Mammary epithelial cell (primary cell): ENCODE measurements at regions of chr20 and their contacts with region 1.

Region 1: DNA sequence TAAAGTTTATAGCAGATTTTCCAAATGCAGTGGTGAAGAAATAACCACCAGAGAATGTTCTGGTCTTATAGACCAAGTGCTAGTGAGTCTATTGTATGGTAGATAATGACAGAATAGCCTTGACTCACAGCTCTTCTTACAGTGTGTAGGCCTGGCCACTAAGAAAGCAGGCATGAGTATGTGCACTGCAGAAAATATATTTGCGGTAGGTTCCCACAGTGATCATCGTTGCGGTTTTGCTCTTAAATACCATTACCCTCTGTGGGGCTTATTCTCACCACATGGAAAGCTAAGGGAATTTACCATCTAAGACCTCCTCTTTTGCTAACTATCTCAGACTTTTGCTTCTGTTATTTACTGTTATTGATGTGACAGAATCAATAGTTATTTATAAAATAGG is 212.3 kb upstream of the SYNDIG1 start:
- DNase-seq: no peak
- H3K4me3 ChIP-seq: no peak overlapping the region
- H3K27ac ChIP-seq: no peak overlapping the region
- H3K4me1 ChIP-seq: no peaks in the 10 kb centered on the region
- H3K27me3 ChIP-seq: no peaks in the 10 kb centered on the region
- CTCF ChIP-seq: no peak

Region 2: GRCh38 chr20:24203526-24204183 is 53.5 kb before region 1 on chr20:
- CTCF ChIA-PET with region 1: no interaction called
- dilution Hi-C with region 1: loop called (anchors 5 kb)
- in situ Hi-C with region 1: no loop called
- intact Hi-C with region 1: no loop called
- DNase-seq: no peak
- H3K4me3 ChIP-seq: no peak overlapping the region
- H3K27ac ChIP-seq: no peak overlapping the region
- H3K4me1 ChIP-seq: no peaks in the 10 kb centered on the region
- H3K27me3 ChIP-seq: no peaks in the 10 kb centered on the region
- CTCF ChIP-seq: no peak

Region 3: GRCh38 chr20:24379484-24379927 is 122.3 kb after region 1 on chr20:
- CTCF ChIA-PET with region 1: no interaction called
- dilution Hi-C with region 1: no loop called
- in situ Hi-C with region 1: no loop called
- intact Hi-C with region 1: no loop called
- DNase-seq: peak; percentile 28
- H3K4me3 ChIP-seq: no peak overlapping the region
- H3K27ac ChIP-seq: no peak overlapping the region
- H3K4me1 ChIP-seq: peaks cover 6% of the 10 kb centered on the region
- H3K27me3 ChIP-seq: no peaks in the 10 kb centered on the region
- CTCF ChIP-seq: no peak